ENCODE measurements at regions of chr12 and their contacts with region 1.

Region 1: DNA sequence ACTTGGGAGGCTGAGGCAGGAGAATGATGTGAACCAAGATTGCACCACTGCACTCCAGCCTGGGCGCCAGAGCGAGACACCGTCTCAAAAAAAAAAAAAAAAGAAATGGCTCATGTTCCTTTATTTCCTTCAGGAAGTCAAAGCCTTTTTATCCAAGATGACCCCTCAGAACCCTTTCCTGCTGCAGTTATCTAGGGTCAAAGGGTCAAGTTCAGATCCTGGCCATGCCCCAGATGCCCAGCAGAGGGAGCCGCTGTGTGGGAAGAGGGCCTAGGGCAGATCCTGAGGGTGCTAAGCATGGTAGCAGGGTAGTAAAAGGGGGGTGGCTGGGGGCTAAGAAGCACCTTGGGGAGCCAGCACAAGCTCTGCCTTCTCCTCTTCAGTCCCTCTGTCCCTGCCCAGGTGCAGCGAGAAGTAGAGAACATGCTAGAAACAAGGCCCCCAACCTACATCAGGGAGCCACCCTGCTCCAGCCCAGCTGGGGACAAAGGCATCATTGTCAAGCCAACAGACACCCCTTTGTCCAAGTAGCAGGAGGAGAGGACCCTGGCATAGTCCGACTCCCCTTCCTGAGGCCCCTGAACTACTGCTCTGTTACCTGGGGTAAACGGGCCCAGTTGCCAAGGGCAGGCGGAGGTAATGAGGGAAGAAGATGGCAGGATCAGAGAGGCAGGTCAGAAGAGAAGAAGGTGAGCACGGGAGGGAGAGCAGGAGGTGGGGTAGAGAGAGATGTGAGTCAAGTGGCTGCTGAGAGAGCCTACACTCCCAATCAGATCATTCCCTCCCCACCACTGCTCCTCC is 6.5 kb downstream of the NFE2 start:
- DNase-seq: peak; percentile 16 to 79 (median 41)
- ATAC-seq: peak; percentile 69 to 70
- H3K4me3 Mint-ChIP-seq: no peak overlapping the region
- H3K27ac Mint-ChIP-seq: peak overlapping the region in 1 of 10 donors; percentile 30
- H3K4me1 Mint-ChIP-seq: peaks cover 2 to 23% (median 5%) of the 10 kb centered on the region in 4 donors
- H3K27me3 Mint-ChIP-seq: peaks cover 5 to 17% (median 11%) of the 10 kb centered on the region in 5 donors

Region 2: GRCh38 chr12:54272214-54272613 is 22.1 kb before region 1 on chr12:
- POLR2A ChIA-PET with region 1: no interaction called
- DNase-seq: no peak
- ATAC-seq: no peak
- H3K4me3 Mint-ChIP-seq: no peak overlapping the region
- H3K27ac Mint-ChIP-seq: peak overlapping the region in 5 of 10 donors; percentile 39 to 75 (median 46)
- H3K4me1 Mint-ChIP-seq: peaks cover 5 to 42% (median 17%) of the 10 kb centered on the region in 4 donors
- H3K27me3 Mint-ChIP-seq: no peaks in the 10 kb centered on the region

Region 3: DNA sequence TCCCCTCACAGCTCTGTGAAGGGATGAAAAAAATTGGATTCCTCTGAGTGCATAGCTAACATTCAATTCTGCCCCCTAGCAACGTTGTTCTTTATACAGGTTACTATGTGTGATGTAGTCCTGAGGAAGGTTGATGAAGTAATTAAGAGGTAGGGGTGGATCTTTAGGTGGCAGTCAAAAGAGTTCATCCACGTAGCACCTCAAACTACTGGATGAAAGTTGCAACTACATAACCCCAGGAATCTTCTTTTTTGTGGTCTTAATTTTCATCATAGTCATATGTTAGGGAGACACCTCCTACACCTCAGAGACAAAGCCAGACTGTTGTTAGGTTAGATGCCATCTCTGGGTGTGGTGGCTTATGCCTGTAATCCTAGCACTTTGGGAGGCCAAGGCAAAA is 16.7 kb after region 1 on chr12:
- POLR2A ChIA-PET with region 1: no interaction called
- DNase-seq: no peak
- ATAC-seq: no peak
- H3K4me3 Mint-ChIP-seq: no peak overlapping the region
- H3K27ac Mint-ChIP-seq: no peak overlapping the region
- H3K4me1 Mint-ChIP-seq: peaks cover 5 to 10% (median 9%) of the 10 kb centered on the region in 4 donors
- H3K27me3 Mint-ChIP-seq: peaks cover 2 to 20% (median 4%) of the 10 kb centered on the region in 5 donors

Region 4: GRCh38 chr12:54352022-54352531 is 57.7 kb after region 1 on chr12:
- POLR2A ChIA-PET with region 1: interaction called, 10 read pairs
- DNase-seq: peak in 6 of 10 donors; percentile 12 to 67 (median 32)
- ATAC-seq: peak; percentile 85 to 92
- H3K4me3 Mint-ChIP-seq: peak overlapping the region; percentile 79 to 91 (median 84)
- H3K27ac Mint-ChIP-seq: peak overlapping the region; percentile 37 to 95 (median 88)
- H3K4me1 Mint-ChIP-seq: peaks cover 12 to 24% (median 17%) of the 10 kb centered on the region in 4 donors
- H3K27me3 Mint-ChIP-seq: no peaks in the 10 kb centered on the region

Region 5: GRCh38 chr12:54359033-54359761 is 64.8 kb after region 1 on chr12:
- POLR2A ChIA-PET with region 1: interaction called, 11 read pairs
- DNase-seq: peak; percentile 80 to 98 (median 94)
- ATAC-seq: peak; percentile 95 to 97
- H3K4me3 Mint-ChIP-seq: no peak overlapping the region
- H3K27ac Mint-ChIP-seq: no peak overlapping the region
- H3K4me1 Mint-ChIP-seq: peaks cover 12 to 19% (median 16%) of the 10 kb centered on the region in 4 donors
- H3K27me3 Mint-ChIP-seq: no peaks in the 10 kb centered on the region